Activated B cell treated with CpG ODN at 0.5 μM for 24 hours (primary cell): ENCODE measurements at regions of chr14 and their contacts with region 1.

Region 1: GRCh38 chr14:35416108-35416750 is 11.7 kb upstream of the NFKBIA start:
- DNase-seq: no peak
- ATAC-seq: peak; percentile 63
- H3K4me3 Mint-ChIP-seq: peak overlapping the region; percentile 65
- H3K27ac Mint-ChIP-seq: peak overlapping the region; percentile 59
- H3K4me1 Mint-ChIP-seq: peaks cover 29% of the 10 kb centered on the region
- H3K27me3 Mint-ChIP-seq: no peaks in the 10 kb centered on the region
- CTCF ChIP-seq: no peak

Region 2: GRCh38 chr14:34671716-34672115 is 744.5 kb before region 1 on chr14:
- CTCF ChIA-PET with region 1: interaction called, 6 read pairs
- POLR2A ChIA-PET with region 1: no interaction called
- intact Hi-C with region 1: loop called (anchors 2 kb)
- DNase-seq: no peak
- ATAC-seq: no peak
- H3K4me3 Mint-ChIP-seq: no peak overlapping the region
- H3K27ac Mint-ChIP-seq: no peak overlapping the region
- H3K4me1 Mint-ChIP-seq: no peaks in the 10 kb centered on the region
- H3K27me3 Mint-ChIP-seq: no peaks in the 10 kb centered on the region
- CTCF ChIP-seq: no peak

Region 3: DNA sequence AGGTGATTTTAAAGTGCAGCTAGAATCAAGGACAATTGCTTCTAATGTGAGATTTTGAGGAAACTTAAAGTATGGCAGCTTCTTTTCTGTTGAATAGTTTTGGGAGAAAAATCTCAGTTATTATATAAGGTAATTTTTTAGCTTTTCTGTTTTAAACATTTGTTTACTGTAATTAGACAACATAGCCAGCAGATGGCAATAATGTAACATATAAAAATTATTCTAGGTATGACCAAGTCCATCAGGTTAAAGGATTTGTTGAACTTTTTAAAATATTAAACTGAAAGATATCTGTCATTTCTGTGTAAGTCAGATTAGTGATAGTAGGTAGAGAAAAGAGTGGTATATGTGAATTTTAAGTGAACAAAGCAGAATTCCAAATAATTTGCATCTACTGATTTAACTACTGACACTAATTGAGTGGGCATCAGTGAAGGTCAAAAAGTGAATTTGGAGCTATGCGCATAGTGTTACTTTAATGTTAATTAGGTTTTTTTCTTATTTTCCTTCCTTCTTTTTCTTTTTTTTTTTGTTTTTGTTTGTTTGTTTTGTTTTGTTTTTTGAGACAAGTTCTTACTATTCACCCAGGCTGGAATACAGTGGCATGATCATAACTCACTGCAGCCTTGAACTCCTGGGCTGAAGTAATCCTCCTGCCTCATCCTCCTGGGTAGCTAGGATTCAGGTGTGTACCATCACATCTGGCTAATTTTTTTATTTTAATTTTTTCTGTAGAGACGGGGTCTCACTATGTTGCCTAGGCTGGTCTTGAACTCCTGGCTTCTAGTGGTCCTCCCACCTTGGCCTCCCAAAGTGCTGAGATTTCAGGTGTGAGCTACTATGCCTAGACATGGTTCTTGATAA is 275.3 kb before region 1 on chr14:
- CTCF ChIA-PET with region 1: interaction called, 263 read pairs
- POLR2A ChIA-PET with region 1: interaction called, 3 read pairs
- intact Hi-C with region 1: loop called (anchors 1 kb)
- DNase-seq: no peak
- ATAC-seq: no peak
- H3K4me3 Mint-ChIP-seq: no peak overlapping the region
- H3K27ac Mint-ChIP-seq: no peak overlapping the region
- H3K4me1 Mint-ChIP-seq: peaks cover 2% of the 10 kb centered on the region
- H3K27me3 Mint-ChIP-seq: no peaks in the 10 kb centered on the region
- CTCF ChIP-seq: peak; percentile 58

Region 4: DNA sequence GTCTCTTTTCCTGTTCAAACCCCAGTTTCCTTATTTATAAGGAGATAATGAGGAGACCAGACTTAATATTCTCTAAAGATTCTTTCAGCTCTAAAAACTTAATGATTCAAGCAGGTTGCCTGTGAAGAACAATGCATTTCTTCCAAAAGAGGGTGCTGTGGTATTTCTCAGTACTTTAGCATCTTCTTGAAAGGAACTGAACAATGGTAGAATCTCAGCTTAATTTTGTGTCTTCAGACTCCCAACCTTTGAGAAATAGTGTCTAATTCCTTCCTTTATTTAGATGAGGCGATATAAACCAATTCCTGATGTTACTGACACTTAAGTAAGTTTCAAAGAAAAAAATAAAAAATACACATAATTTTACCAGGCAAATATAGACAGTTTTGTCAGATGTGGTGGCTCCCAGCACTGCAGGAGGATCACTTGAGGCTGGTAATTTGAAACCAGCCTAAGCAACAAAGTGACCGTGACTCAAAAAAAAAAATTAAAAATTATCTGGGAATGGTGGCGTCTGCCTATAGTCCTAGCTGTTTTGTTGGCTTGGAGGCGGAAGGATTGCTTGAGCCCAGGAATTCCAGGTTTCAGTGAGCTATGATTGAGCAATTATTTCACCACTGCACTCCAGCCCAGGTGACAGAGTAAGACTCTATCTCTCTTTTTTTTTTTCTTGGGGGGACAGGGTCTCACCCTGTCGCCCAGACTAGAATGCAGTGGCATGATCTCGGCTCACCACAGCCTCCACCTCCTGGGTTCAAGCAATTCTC is 200.9 kb before region 1 on chr14:
- CTCF ChIA-PET with region 1: interaction called, 18 read pairs
- POLR2A ChIA-PET with region 1: no interaction called
- intact Hi-C with region 1: loop called (anchors 1 kb)
- DNase-seq: no peak
- ATAC-seq: no peak
- H3K4me3 Mint-ChIP-seq: no peak overlapping the region
- H3K27ac Mint-ChIP-seq: no peak overlapping the region
- H3K4me1 Mint-ChIP-seq: no peaks in the 10 kb centered on the region
- H3K27me3 Mint-ChIP-seq: no peaks in the 10 kb centered on the region
- CTCF ChIP-seq: no peak

Region 5: DNA sequence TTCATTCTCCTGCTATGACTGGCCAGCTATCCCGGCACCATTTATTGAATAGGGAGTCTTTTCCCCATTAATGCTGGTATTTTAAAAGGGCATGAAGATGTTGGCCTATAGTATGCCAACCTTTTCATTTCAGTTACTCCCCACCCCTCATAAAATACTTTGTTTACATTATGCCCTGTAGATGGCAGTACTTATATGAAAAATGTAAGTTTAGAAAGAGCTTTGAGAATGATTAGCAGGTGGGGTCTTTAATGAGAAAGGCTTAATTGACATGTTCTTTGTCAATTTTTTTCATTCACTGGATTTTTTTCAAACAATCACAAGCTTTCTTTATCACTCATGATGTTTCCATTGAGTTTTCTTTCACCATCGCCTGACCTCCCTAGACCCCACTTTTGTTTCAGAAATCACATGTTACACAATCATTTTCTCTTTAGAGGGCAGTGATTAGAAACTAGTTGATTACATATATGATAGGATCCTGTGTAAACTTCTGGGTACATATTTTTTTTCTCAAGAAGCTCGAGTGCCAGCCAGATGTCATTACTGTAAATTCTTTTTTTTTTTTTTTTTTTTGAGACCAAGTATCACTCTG is 186.6 kb before region 1 on chr14:
- CTCF ChIA-PET with region 1: interaction called, 52 read pairs
- POLR2A ChIA-PET with region 1: interaction called, 4 read pairs
- intact Hi-C with region 1: loop called (anchors 1 kb)
- DNase-seq: no peak
- ATAC-seq: peak; percentile 65
- H3K4me3 Mint-ChIP-seq: no peak overlapping the region
- H3K27ac Mint-ChIP-seq: no peak overlapping the region
- H3K4me1 Mint-ChIP-seq: peaks cover 5% of the 10 kb centered on the region
- H3K27me3 Mint-ChIP-seq: no peaks in the 10 kb centered on the region
- CTCF ChIP-seq: no peak

Region 6: DNA sequence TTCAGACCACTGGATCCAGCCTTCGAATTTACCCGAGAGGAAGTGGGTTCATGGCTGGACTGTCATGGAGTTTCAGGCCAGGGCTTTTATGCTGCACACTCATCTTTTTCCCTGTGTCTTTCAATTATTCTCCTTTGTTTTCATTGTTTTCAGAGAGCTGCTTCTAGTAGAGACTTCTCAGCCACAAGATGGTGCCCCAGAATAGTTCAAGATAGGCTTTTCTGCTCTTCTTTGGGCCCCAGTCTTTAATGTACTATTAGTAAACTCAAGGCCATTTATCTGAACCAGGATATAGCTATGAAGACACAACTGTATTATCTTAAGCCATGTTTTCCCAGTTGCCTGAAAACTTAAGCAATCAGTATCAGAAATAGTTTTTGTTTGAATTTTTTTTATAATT is 154.5 kb before region 1 on chr14:
- CTCF ChIA-PET with region 1: interaction called, 25 read pairs
- POLR2A ChIA-PET with region 1: no interaction called
- intact Hi-C with region 1: no loop called
- DNase-seq: no peak
- ATAC-seq: no peak
- H3K4me3 Mint-ChIP-seq: no peak overlapping the region
- H3K27ac Mint-ChIP-seq: no peak overlapping the region
- H3K4me1 Mint-ChIP-seq: no peaks in the 10 kb centered on the region
- H3K27me3 Mint-ChIP-seq: no peaks in the 10 kb centered on the region
- CTCF ChIP-seq: no peak

Region 7: GRCh38 chr14:35687335-35687939 is 271.2 kb after region 1 on chr14:
- CTCF ChIA-PET with region 1: interaction called, 3 read pairs
- POLR2A ChIA-PET with region 1: no interaction called
- intact Hi-C with region 1: loop called (anchors 2 kb)
- DNase-seq: no peak
- ATAC-seq: peak; percentile 60
- H3K4me3 Mint-ChIP-seq: no peak overlapping the region
- H3K27ac Mint-ChIP-seq: no peak overlapping the region
- H3K4me1 Mint-ChIP-seq: peaks cover 11% of the 10 kb centered on the region
- H3K27me3 Mint-ChIP-seq: no peaks in the 10 kb centered on the region
- CTCF ChIP-seq: peak; percentile 51